Motor neuron (in vitro differentiated cells): ENCODE measurements at regions of chr12 and their contacts with region 1.

Region 1: DNA sequence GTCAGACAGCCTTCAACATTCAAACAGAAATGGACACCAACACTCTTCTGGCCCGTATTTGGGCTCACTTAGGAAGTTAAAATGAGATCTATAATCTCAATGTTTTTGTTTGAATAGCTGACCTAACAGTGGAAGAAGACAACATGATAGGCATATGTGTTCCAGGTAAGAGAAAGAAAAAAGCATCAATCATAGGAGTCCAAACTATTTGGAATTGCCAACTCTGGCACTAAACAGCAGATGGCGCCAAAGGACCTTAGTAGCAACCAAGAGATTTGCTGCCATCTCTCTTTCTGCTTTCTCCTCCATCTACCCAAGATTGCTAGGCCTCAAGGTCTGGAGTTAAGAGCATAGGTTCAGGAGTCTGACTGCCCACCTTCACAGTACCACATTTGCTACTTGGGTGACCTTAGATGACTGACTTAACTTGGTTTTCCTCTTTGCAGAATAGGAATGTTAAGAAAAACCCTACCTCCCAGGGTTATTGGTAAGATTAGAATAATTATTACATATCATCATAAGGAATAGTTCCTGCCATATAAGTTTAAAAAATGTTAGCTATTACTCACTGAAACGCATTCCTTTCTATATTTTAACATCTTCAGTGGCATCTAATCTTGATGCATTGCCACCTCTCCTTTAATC is 30.2 kb downstream of the PEX5 start:
- ATAC-seq: peak in 6 of 8 experiments; percentile 21 to 78 (median 63)
- H3K4me3 ChIP-seq: no peak overlapping the region
- H3K27ac ChIP-seq: no peak overlapping the region
- H3K4me1 ChIP-seq: no peaks in the 10 kb centered on the region

Region 2: DNA sequence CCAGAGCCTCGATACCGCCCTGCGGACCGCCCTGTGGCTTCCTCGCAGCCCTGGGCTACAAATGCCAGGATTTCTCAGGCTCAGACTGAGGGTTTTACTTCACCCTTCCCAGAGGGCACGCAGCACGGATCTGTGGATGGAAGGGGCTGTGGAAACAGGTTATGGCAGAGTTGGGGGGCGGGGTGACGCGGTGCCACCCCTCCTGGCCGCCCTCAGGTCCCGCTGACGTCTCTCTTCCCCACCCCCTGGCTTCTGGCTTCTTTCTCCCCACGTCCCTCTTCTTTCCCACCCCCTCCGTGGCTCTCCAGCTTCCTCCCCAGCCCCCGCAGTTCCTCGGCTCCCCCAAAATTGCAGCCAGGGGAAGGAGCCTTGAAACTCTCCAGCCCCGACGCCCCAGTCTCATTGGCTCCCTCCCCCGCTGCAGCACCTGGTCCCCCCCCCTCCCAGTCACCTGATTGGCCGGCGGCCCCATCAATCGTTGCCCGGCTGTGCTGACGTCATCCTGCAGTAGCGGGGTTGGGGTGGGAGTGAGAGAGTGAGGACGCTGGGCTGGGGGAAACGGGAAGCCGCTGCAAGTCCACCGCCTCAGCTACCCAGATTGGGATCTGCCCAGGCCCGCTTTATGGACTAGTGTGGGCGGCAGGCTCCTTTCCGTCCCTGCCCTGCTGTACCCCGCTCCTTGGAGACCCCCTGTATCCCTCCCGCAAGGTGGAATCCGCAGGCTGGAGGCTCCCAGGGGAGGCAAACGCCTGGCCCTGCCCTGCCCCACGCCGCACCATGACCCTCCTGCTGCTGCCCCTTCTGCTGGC is 89.6 kb before region 1 on chr12 and contains the start of gene CLSTN3:
- in situ Hi-C with region 1: no loop called
- ATAC-seq: peak; percentile 58 to 89 (median 84)
- H3K4me3 ChIP-seq: peak within 1 kb of the TSS; percentile 69 to 98 (median 92)
- H3K27ac ChIP-seq: peak within 1 kb of the TSS; percentile 63 to 83
- H3K4me1 ChIP-seq: peaks cover 16 to 17% of the 10 kb centered on the region in 2 donors
- total RNA-seq, gene CLSTN3: 15.1 to 62.6 (median 44.1) TPM

Region 3: DNA sequence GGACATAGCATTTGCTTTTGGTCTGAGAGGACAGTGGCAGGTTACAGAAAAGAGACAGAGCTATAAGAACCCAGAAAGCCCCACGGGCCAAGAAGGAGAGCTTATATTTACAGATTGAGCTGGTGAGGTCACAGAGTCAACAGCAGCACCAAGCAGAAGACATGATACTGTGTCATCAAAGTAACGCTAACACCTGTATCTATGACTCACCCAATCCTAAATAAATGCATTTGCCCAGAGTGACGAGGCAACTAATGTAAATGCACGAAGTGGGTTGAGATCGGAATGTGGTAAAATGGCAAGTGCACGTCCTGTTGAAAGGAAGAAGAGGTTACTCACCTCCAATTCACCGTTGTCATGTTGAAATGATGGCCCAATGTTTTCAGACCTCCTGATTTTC is 230.9 kb after region 1 on chr12:
- in situ Hi-C with region 1: loop called in 5 of 9 experiments (anchors 10 to 25 kb)
- ATAC-seq: no peak
- H3K4me3 ChIP-seq: no peak overlapping the region
- H3K27ac ChIP-seq: no peak overlapping the region
- H3K4me1 ChIP-seq: no peaks in the 10 kb centered on the region

Region 4: DNA sequence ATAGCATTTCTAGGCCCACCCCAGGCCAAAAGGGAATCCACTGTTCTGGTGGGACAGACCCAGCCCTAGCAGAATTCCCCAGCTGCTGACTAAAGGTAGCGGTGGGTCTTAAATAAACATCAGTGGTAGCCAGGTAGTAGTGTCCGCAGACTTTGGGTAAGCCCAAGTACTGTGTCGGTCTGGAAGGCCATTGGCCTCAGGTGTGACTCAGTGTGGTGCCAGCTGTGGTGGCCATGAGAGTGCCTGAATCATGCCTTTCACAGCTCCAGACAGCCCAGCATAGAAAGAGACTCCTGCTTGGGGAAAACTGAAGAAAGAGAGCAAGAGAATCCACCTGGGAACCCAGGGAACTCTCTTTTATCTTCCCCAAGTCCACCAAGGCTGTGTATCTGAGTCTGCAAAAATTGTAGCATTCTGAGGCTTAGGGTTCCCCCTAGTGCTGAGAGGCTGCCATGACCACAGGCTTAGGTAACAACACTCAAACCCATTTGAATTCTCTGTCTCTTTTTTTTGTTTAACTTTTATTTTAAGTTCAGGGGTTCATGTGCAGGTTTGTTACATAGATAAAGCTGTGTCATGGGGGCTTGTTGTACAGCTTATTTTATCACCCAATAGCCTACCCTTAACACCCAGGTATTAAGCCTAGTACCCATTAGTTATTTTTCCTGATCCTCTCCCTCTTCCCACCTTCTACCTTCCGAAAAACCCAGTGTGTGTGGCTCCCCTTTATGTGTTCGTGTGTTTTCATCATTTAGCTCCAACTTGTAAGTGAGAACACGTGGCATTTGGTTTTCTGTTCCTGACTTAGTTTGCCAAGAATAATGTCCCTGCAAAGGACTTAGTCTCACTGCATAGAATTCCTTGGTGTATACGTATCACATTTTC is 240.9 kb after region 1 on chr12:
- in situ Hi-C with region 1: loop called in 5 of 9 experiments (anchors 10 to 25 kb)
- ATAC-seq: peak; percentile 76 to 92 (median 81)
- H3K4me3 ChIP-seq: no peak overlapping the region
- H3K27ac ChIP-seq: no peak overlapping the region
- H3K4me1 ChIP-seq: no peaks in the 10 kb centered on the region

Region 5: GRCh38 chr12:7638760-7639555 is 419.2 kb after region 1 on chr12:
- in situ Hi-C with region 1: loop called (anchors 10 to 25 kb)
- ATAC-seq: peak; percentile 91 to 99 (median 98)
- H3K4me3 ChIP-seq: peak overlapping the region; percentile 13 to 29 (median 19)
- H3K27ac ChIP-seq: no peak overlapping the region
- H3K4me1 ChIP-seq: peaks cover 2 to 6% of the 10 kb centered on the region in 2 donors

Region 6: GRCh38 chr12:7853557-7853956 is 633.8 kb after region 1 on chr12:
- in situ Hi-C with region 1: no loop called
- ATAC-seq: no peak
- H3K4me3 ChIP-seq: no peak overlapping the region
- H3K27ac ChIP-seq: no peak overlapping the region
- H3K4me1 ChIP-seq: no peaks in the 10 kb centered on the region